ENCODE measurements at regions of chr19 and their contacts with region 1.

Region 1: GRCh38 chr19:16247353-16248182 is 49.9 kb downstream of the AP1M1 start:
- DNase-seq: peak; percentile 90
- CTCF ChIP-seq: peak; percentile 86

Region 2: DNA sequence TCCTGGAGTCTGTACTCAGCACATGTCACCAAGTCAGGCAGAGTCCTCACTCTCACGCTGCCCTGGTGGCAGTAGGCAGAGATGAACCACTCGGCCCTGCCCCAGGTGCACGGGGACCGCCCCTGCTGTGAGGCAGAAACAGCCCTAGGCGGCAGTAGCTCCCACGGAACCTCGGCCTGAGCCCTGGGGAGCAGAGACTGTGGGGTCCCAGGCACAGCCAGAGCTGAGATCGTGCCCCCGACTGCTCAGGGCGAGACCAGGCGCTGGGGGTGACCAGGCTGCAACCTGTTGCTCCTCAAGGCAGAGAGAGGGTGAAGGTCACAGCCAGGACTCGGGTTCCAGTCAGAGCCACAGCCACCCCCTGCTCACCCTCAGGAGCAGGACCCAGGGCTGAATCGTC is 15.0 kb before region 1 on chr19:
- CTCF ChIA-PET with region 1: interaction called, 13 read pairs
- POLR2A ChIA-PET with region 1: no interaction called
- DNase-seq: peak; percentile 10
- CTCF ChIP-seq: no peak

Region 3: DNA sequence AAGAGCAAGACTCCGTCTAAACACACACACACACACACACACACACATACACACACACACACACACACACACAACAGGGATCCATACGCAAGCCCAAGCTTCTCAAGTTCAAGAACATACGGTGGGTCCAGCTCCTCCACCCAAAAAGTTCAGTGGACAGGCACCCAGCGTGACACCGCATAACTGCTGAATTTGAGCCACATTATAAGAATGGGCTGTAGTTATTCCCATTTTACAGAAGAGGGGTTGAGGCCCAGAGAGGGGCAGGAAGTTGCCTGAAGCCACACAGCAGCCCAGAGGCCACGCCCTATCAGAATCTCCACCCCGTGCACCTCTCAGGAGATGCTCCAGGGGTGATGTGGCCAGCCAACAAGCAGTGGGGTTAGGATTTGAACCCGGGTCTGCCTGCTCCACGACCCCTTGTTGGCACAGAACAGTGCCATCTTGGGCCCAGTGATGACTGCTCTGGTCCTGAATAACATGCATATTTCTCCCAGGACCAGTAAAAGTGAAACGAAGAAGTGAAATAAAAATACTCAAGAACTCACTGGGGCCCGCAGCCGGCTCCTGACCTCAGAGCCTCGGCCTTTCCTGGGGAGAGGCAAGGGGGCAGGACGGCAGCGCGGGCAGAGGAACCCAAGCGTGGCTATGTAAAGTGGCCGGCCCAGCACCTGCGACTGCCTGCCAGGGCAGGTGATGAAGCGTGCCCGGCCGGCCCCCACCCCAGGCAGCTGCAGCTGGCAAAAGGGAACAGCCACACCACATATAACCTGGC is 12.0 kb after region 1 on chr19:
- CTCF ChIA-PET with region 1: interaction called, 14 read pairs
- POLR2A ChIA-PET with region 1: no interaction called
- DNase-seq: peak; percentile 75
- CTCF ChIP-seq: no peak

Region 4: GRCh38 chr19:16308081-16308480 is 60.5 kb after region 1 on chr19:
- CTCF ChIA-PET with region 1: no interaction called
- POLR2A ChIA-PET with region 1: no interaction called
- DNase-seq: no peak
- CTCF ChIP-seq: no peak

Region 5: DNA sequence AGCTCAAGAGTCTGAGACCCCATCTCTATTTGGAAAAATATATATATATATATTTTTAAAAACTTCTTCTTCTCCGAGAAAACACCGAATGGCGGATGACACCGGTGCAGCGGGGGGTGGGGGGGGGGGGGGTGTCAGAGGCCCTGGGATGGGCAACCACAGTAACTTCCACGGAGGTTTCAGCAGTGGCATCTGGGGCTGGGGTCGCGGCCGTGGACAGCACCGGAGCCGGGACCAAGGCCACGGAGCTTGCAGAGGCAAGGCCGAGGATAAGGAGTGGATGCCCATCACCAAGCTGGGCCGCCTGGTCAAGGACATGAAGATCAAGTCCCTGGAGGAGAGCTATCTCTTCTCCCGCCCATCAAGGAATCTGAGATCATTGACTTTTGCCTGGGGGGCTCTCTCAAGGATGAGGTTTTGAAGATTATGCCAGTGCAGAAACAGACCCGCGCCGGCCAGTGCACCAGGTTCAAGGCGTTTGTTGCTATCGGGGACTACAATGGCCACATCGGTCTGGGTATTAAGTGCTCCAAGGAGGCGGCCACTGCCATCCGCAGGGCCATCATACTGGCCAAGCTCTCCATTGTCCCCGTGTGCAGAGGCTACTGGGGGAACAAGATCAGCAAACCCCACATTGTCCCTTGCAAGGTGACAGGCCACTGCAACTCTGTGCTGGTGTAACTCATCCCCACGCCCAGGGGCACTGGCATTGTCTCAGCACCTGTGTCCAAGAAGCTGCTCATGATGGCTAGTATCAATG is 165.2 kb after region 1 on chr19:
- CTCF ChIA-PET with region 1: interaction called, 61 read pairs
- POLR2A ChIA-PET with region 1: no interaction called
- DNase-seq: no peak
- CTCF ChIP-seq: no peak

Region 6: DNA sequence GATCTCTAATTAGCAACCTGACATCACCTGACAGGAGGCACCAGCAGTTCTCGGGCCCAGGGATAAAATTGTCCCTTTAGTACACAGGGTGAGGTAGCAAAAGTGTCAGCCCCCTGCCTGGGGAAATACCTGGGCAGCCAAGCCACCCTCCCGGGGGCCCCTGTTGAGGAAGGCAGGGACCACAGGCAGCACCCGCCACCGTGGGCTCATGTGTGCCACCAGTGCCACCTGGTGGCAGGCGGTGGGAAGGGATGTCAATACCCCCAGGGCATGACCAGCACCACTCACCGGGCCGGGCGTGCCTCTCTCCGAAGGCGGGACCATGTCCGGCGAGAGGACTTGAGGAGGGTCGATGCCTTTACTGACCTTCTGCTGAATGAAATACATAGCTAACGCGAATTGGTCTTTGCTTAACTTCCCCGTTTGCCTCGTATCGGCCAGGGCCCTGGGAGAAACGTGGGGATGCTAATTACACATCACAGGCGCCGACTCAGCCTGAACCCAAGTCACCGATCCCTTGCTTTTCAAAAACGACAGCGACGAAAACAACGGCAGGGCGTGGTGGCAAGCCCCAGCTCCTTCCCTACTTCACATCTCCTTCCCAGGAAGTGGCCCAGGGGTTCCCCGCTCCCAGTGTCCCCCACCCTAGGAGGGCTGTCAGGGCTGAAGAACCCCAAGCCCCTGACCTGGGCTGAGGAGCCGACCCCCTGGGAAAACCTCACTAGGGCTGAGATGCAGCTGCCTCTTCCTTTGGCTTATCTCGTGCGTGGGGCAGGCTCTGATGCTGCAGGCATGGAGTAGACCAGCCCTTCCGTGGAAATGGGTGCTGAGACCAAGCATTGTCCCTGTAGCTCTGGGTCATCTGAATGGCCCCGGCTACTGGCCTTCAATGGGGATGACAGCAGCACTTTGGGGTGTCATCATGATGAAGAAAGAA is 170.4 kb after region 1 on chr19:
- CTCF ChIA-PET with region 1: interaction called, 61 read pairs
- POLR2A ChIA-PET with region 1: no interaction called
- DNase-seq: peak; percentile 89
- CTCF ChIP-seq: peak; percentile 88

Measured in GM10248 (cell line).